ENCODE measurements at regions of chr5 and their contacts with region 1.

Region 1: GRCh38 chr5:134140530-134141201 is 26.2 kb downstream of the TCF7 start:
- DNase-seq: peak; percentile 83
- H3K4me3 Mint-ChIP-seq: no peak overlapping the region
- H3K27ac Mint-ChIP-seq: peak overlapping the region; percentile 82
- H3K4me1 Mint-ChIP-seq: peaks cover 66% of the 10 kb centered on the region
- H3K27me3 Mint-ChIP-seq: no peaks in the 10 kb centered on the region

Region 2: GRCh38 chr5:134026521-134027268 is 114.0 kb before region 1 on chr5:
- CTCF ChIA-PET with region 1: interaction called, 28 read pairs
- intact Hi-C with region 1: no loop called
- DNase-seq: peak; percentile 75
- H3K4me3 Mint-ChIP-seq: no peak overlapping the region
- H3K27ac Mint-ChIP-seq: no peak overlapping the region
- H3K4me1 Mint-ChIP-seq: peaks cover 1% of the 10 kb centered on the region
- H3K27me3 Mint-ChIP-seq: no peaks in the 10 kb centered on the region

Region 3: GRCh38 chr5:134034326-134034725 is 106.3 kb before region 1 on chr5:
- CTCF ChIA-PET with region 1: interaction called, 593 read pairs
- intact Hi-C with region 1: loop called (anchors 1 kb)
- DNase-seq: no peak
- H3K4me3 Mint-ChIP-seq: no peak overlapping the region
- H3K27ac Mint-ChIP-seq: no peak overlapping the region
- H3K4me1 Mint-ChIP-seq: peaks cover 10% of the 10 kb centered on the region
- H3K27me3 Mint-ChIP-seq: no peaks in the 10 kb centered on the region

Region 4: DNA sequence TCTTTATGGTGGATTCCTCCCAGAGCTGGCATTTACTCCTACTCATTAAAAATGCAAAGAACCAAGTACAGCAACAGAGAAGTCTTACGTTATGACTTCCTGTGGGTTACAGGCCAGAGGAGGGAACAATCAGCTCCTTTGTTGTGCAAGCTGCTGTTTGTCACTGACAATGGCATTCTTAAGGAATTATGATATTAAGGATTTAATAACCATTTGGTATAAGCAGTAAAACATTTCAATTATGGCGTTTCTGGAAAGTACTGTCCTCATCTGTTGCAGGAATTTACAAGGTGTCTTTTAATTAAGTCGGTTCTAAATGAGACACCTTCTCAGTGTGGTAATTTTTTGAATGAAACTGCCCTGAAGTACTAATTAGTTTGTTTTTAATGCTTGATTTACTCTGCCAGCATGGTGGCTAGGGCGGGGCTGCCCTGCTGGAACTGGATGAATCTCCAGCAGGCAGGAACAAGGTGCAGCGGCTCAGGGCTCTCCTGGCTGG is 86.8 kb before region 1 on chr5:
- CTCF ChIA-PET with region 1: interaction called, 14 read pairs
- intact Hi-C with region 1: no loop called
- DNase-seq: no peak
- H3K4me3 Mint-ChIP-seq: no peak overlapping the region
- H3K27ac Mint-ChIP-seq: peak overlapping the region; percentile 65
- H3K4me1 Mint-ChIP-seq: peaks cover 52% of the 10 kb centered on the region
- H3K27me3 Mint-ChIP-seq: no peaks in the 10 kb centered on the region

Region 5: DNA sequence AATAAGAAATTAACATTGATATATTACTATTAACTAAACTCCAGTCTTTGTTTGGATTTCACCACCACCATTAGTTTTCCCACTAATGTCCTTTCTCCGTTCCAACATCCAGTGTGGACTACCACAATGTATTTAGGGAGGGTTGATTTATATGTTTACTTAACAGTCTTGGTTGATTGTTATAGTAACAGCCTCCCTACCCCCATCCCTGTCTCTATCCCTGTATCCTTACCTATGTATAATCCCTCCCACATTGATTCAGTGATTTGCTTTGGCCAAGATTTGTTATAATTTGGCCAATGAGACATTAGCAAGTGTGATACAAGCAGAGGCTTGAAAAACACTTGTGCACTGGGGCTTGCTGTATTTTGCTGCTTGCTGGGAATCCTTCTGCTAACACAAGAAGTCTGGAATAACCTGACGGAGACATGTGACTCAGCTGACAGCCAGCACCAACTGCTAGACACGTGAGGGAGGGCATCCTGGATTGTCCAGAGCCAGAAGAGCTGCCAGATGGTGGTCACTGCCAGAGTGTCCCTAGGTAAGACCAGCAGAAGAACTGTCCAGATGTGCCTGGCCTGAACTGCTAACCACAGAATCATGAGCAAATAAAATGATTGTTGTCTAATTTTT is 77.4 kb before region 1 on chr5:
- CTCF ChIA-PET with region 1: interaction called, 24 read pairs
- intact Hi-C with region 1: loop called (anchors 1 kb)
- DNase-seq: no peak
- H3K4me3 Mint-ChIP-seq: no peak overlapping the region
- H3K27ac Mint-ChIP-seq: no peak overlapping the region
- H3K4me1 Mint-ChIP-seq: peaks cover 26% of the 10 kb centered on the region
- H3K27me3 Mint-ChIP-seq: no peaks in the 10 kb centered on the region

Region 6: GRCh38 chr5:134070725-134071613 is 69.7 kb before region 1 on chr5:
- CTCF ChIA-PET with region 1: interaction called, 24 read pairs
- intact Hi-C with region 1: loop called (anchors 1 kb)
- DNase-seq: peak; percentile 85
- H3K4me3 Mint-ChIP-seq: peak overlapping the region; percentile 79
- H3K27ac Mint-ChIP-seq: peak overlapping the region; percentile 97
- H3K4me1 Mint-ChIP-seq: peaks cover 70% of the 10 kb centered on the region
- H3K27me3 Mint-ChIP-seq: no peaks in the 10 kb centered on the region

Region 7: DNA sequence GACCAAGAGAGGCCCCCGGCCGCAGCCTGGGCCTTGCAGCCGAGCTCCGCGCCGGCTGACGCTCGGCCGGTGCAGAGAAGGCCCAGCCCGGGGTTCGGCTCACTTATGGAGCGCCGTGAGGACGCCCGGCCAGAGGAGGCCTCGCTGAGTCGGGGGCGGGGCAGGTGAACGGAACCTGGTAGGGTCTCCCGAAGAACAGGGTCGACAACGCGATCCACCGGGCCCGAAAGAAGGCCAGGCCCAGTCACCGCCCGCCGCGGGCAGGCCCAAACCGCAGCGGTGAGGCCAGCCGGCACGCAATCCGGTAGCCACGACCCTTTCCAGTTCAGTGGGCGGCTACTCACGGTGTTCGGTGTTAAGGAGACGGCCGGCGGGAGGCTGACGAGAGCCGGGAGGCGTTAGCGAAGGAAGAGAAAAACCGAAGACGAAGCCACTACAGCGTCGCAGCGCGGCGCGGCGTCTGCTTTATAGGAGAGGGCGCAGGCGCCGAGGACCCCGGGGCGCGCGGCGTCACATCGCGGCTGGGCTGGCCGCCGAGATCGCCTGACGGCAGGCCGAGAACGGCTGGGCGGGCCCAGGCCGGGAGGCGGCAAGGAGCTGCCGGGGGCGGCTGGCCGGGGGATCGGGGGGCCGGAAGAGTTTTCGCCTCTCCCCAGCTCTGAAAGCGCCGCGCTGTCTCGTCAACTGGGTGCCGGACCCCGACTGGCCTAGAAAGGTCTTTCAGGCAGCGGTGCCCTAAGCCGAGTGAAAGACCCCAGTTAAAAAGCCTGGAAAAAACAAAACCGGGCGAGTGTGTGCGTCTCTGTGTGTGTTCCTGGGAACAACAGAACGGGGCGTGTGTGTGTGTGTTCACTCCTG is 36.1 kb after region 1 on chr5 and contains the start of gene SKP1:
- CTCF ChIA-PET with region 1: interaction called, 4 read pairs
- intact Hi-C with region 1: loop called (anchors 2 kb)
- DNase-seq: peak; percentile 83
- H3K4me3 Mint-ChIP-seq: peak within 1 kb of the TSS; percentile 96
- H3K27ac Mint-ChIP-seq: peak within 1 kb of the TSS; percentile 94
- H3K4me1 Mint-ChIP-seq: peaks cover 31% of the 10 kb centered on the region
- H3K27me3 Mint-ChIP-seq: no peaks in the 10 kb centered on the region
- total RNA-seq, gene SKP1: 307 to 309 TPM

Region 8: DNA sequence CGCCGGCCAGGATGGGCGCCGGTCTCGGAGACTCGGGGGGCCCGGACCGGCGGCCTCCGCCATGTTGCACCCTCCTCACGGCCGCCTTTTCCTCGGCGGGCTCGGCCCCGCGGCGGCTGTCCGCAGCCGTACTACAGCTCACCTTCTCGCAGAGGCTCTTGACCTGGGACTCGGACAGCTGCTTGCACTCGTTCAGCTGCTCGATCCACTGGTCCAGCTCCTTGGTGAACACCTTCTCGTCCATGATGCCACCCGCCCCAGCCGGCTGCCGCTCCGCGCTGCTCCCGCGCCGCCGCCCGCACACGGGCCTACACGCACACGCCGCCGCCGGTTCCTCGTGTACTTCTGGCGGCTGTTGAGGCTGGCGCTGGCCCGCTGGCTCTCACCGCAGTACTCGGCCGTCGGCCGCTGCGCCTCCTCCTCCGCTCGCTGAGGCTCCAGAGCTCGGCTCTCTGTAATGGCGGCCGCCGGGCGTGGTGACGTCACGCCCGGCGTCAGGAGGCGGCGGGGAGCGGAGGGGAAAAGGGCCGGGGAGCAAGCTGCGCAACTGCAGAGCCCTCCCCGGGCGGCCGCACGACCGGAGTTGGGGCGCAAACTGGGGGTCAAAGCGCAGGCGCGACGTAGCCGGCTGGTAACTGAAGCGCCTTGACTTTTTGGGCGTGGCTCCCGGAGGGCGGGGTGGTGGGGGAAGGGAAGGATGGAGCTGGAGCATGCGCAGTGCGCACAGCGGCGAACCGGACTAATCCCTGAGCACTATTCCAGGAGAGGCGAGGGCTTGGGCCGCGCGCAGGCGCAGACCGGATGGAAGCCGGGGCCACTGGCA is 85.2 kb after region 1 on chr5 and contains the start of gene PPP2CA:
- CTCF ChIA-PET with region 1: no interaction called
- intact Hi-C with region 1: no loop called
- DNase-seq: peak; percentile 99
- H3K4me3 Mint-ChIP-seq: peak within 1 kb of the TSS; percentile 96
- H3K27ac Mint-ChIP-seq: peak within 1 kb of the TSS; percentile 96
- H3K4me1 Mint-ChIP-seq: peaks cover 52% of the 10 kb centered on the region
- H3K27me3 Mint-ChIP-seq: no peaks in the 10 kb centered on the region
- total RNA-seq, gene PPP2CA: 132 to 135 TPM

Measured in activated naive CD4-positive, alpha-beta T cell treated with anti-CD3 and anti-CD28 coated beads for 36 hours (primary cell).